ENCODE measurements at regions of chr14 and their contacts with region 1.

Region 1: GRCh38 chr14:90399541-90400444 is 3.0 kb downstream of the CALM1 start:
- ATAC-seq: peak; percentile 41 to 58 (median 52)
- H3K4me3 ChIP-seq: peak overlapping the region; percentile 61 to 85 (median 81)
- H3K27ac ChIP-seq: no peak overlapping the region
- H3K4me1 ChIP-seq: peaks cover 18 to 22% of the 10 kb centered on the region in 2 donors

Region 2: GRCh38 chr14:90697577-90698206 is 297.9 kb after region 1 on chr14:
- in situ Hi-C with region 1: loop called in 3 of 9 experiments (anchors 25 kb)
- ATAC-seq: peak; percentile 64 to 93 (median 75)
- H3K4me3 ChIP-seq: no peak overlapping the region
- H3K27ac ChIP-seq: no peak overlapping the region
- H3K4me1 ChIP-seq: peaks cover 37 to 39% of the 10 kb centered on the region in 2 donors

Measured in motor neuron (in vitro differentiated cells).